H1 (cell line): ENCODE measurements at regions of chr9 and their contacts with region 1.

Region 1: DNA sequence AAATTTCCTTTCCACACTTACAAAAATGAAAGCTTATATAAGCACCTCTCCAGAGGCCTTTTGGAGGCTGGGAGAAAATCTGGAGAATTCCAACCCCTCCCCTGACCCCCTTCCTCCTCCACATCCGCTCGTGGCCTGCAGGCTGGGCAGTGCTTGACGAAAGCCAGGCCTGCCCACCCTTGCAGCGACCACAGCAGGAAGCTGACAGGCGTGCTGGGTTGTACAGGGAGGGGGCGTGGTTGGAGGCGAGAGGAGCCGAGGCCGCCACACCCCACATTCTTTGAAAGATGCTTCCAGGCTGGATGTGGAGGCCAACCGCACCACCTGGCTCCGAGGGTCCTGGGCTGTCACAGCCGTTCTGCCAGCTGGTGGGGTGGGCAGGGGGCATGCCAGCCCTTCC is 47.8 kb upstream of the IER5L start:
- DNase-seq: no peak
- H3K4me3 ChIP-seq: no peak overlapping the region
- H3K27ac ChIP-seq: no peak overlapping the region
- H3K4me1 ChIP-seq: peaks cover 0 to 24% (median 13%) of the 10 kb centered on the region in 4 experiments; a peak in 6 of 7 replicates
- H3K27me3 ChIP-seq: no peaks in the 10 kb centered on the region
- CTCF ChIP-seq: no peak
- EP300 ChIP-seq: no peak
- POLR2A ChIP-seq: no peak
- RAD21 ChIP-seq: peak in 1 of 2 experiments; percentile 6; a peak in 1 of 4 replicates

Region 2: DNA sequence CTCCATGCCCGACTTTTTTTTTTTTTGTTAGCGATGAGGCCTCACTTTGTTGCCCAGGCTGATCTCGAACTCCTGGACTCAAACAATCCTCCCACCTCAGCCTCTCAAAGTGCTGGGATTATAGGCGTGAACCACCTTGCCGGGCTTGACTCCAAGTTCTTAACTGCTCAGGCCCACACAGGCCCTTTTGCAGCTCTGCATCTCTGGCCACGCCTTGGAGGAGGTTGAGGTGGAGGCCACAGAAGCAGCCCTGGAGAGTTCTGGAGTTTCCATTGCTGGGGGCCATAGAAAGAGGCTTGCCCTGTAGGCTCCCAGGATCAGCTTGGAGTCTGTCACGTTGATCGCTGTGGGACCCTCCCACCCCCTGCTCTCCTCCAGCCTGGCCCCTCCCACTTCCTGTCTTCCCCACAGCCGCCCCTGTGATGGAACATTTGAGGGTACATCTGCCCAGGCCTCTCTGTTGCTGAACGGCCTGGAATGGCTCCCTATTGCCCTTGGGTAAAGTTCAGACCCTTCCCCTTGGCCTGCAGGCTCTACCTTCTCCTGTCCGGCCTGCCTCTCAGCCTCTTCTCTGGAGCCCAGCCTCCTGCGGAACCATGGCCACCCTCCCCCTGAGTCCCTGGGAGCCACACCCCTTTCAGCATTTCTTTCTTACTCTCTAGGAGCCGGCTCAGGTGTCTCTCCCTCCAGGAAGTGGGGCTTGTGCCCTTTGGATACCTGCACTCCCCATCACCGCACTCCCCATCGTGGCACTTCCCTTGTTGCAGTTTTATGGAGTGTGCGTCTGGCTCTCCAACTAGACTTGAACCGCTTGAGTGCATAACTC is 17.4 kb before region 1 on chr9:
- CTCF ChIA-PET with region 1: interaction called, 6 read pairs
- POLR2A ChIA-PET with region 1: interaction called, 17 read pairs
- DNase-seq: peak; percentile 51 to 85
- H3K4me3 ChIP-seq: peak overlapping the region; percentile 51 to 83 (median 66)
- H3K27ac ChIP-seq: peak overlapping the region; percentile 69
- H3K4me1 ChIP-seq: peaks cover 0 to 14% (median 8%) of the 10 kb centered on the region in 4 experiments; a peak in 6 of 7 replicates
- H3K27me3 ChIP-seq: peaks cover 0 to 9% (median 4%) of the 10 kb centered on the region in 4 experiments; a peak in 4 of 7 replicates
- CTCF ChIP-seq: no peak
- EP300 ChIP-seq: no peak
- POLR2A ChIP-seq: no peak
- RAD21 ChIP-seq: no peak

Region 3: DNA sequence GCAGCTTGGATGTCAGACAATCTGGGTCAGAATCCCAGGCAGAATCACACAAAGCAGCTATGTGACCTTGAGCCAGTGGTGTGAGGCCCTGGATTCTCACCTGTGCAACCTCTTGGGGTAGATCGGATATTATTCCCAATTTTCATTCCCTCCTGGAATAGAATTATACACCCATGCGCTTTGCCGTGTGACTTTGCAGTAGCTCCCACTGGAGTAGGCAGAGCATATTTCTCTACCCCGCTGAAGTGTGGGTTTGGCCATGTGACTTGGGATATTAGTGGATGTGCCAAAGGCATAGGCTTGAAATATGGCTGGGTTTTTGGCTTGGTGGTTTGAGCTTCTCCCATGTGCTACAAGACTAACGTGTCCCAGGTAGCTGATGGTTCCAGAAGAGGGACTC is 12.3 kb before region 1 on chr9:
- CTCF ChIA-PET with region 1: interaction called, 12 read pairs
- POLR2A ChIA-PET with region 1: interaction called, 17 read pairs
- DNase-seq: no peak
- H3K4me3 ChIP-seq: no peak overlapping the region
- H3K27ac ChIP-seq: no peak overlapping the region
- H3K4me1 ChIP-seq: peaks cover 0 to 17% (median 10%) of the 10 kb centered on the region in 4 experiments; a peak in 6 of 7 replicates
- H3K27me3 ChIP-seq: no peaks in the 10 kb centered on the region
- CTCF ChIP-seq: no peak
- EP300 ChIP-seq: no peak
- POLR2A ChIP-seq: no peak
- RAD21 ChIP-seq: no peak